Right lobe of liver (tissue), 6 donors: ENCODE measurements at regions of chr7 and their contacts with region 1.

Region 1: GRCh38 chr7:108002726-108003598 is at the start of gene LAMB1:
- DNase-seq: peak; percentile 52 to 75 (median 57)
- ATAC-seq: peak; percentile 22 to 56 (median 46)
- H3K4me3 ChIP-seq: peak within 1 kb of the TSS; percentile 49 to 53 (median 49)
- H3K27ac ChIP-seq: peak within 1 kb of the TSS in 2 of 3 donors; percentile 6 to 60
- H3K4me1 ChIP-seq: peaks cover 0 to 24% (median 5%) of the 10 kb centered on the region in 4 donors
- H3K27me3 ChIP-seq: peaks cover 0 to 3% of the 10 kb centered on the region in 2 donors
- CTCF ChIP-seq: no peak
- POLR2A ChIP-seq: peak; percentile 78
- total RNA-seq, gene LAMB1: 14.9 to 61.0 (median 28.9) TPM

Region 2: DNA sequence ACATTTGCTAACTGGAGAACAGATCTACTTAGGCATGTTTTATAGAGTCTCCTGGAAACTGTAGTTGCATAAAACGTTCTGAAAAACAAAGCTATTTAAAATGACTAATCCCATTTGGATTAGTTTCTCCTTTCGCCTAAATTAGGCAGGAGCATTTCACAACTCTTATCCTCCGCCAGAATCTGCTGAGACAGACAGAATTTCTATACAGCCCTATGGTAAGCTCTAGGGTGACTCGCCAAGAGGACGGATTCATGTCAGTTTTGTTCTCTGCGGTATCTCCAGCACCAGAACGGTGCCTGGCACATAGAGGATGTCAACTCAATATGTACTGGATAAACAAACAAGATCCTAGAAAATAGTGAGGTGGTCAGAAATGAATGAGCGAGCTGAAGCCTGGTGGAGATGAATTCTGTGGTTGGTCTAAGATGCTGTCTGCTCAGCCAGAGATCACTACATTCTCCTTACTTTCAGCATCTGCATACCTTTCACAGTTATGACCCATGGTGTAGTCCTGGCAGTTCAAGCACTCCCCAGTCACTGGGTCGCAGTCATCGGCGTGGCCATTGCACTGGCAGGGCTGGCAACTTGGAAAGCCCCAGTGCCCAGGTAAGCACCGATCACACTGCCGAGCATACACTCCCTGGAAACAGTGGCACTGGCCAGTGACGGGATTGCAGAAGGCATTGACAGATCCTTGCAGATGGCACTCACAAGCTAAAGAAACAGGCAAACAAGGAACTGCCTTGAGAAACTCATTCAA is 44.0 kb before region 1 on chr7:
- intact Hi-C with region 1: loop called in 1 of 2 experiments (anchors 10 kb)
- DNase-seq: no peak
- ATAC-seq: peak; percentile 38 to 74 (median 62)
- H3K4me3 ChIP-seq: no peak overlapping the region
- H3K27ac ChIP-seq: no peak overlapping the region
- H3K4me1 ChIP-seq: no peaks in the 10 kb centered on the region
- H3K27me3 ChIP-seq: no peaks in the 10 kb centered on the region
- CTCF ChIP-seq: no peak
- POLR2A ChIP-seq: no peak

Region 3: GRCh38 chr7:108063520-108063933 is 60.6 kb after region 1 on chr7:
- intact Hi-C with region 1: no loop called
- DNase-seq: peak in 1 of 3 donors; percentile 64
- ATAC-seq: peak; percentile 43 to 77 (median 58)
- H3K4me3 ChIP-seq: no peak overlapping the region
- H3K27ac ChIP-seq: no peak overlapping the region
- H3K4me1 ChIP-seq: no peaks in the 10 kb centered on the region
- H3K27me3 ChIP-seq: no peaks in the 10 kb centered on the region
- CTCF ChIP-seq: no peak
- POLR2A ChIP-seq: no peak

Region 4: DNA sequence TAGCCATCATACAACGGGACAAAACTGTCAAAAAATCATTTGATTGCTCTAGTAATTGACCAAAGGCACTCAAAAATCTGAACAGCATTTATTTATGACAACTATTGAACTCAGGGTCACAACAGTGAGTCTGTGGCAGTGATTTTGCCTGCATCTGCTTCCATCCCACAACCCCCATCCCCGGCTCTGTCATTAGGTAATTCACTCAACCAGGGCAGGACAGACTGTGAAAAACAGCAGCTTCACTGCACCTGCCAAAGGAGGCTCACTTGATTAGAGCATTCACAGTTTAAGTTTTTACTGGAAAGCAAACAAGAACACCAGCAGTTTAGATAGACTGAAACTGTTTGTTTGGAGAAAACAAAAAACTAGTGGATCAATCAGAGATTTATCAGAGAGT is 431.0 kb after region 1 on chr7:
- intact Hi-C with region 1: no loop called
- DNase-seq: no peak
- ATAC-seq: peak in 1 of 4 donors; percentile 38
- H3K4me3 ChIP-seq: no peak overlapping the region
- H3K27ac ChIP-seq: no peak overlapping the region
- H3K4me1 ChIP-seq: no peaks in the 10 kb centered on the region
- H3K27me3 ChIP-seq: no peaks in the 10 kb centered on the region
- CTCF ChIP-seq: no peak
- POLR2A ChIP-seq: no peak